Aorta (tissue), 5 donors: ENCODE measurements at regions of chr16 and their contacts with region 1.

Region 1: GRCh38 chr16:11515540-11516430 is 70.9 kb downstream of the LITAF start:
- DNase-seq: no peak
- ATAC-seq: no peak
- H3K4me3 ChIP-seq: no peak overlapping the region
- H3K27ac ChIP-seq: no peak overlapping the region
- H3K4me1 ChIP-seq: no peaks in the 10 kb centered on the region
- H3K27me3 ChIP-seq: no peaks in the 10 kb centered on the region

Region 2: GRCh38 chr16:11446566-11447119 is 69.1 kb before region 1 on chr16:
- intact Hi-C with region 1: loop called in 1 of 2 experiments (anchors 2 kb)
- DNase-seq: no peak
- ATAC-seq: no peak
- H3K4me3 ChIP-seq: no peak overlapping the region
- H3K27ac ChIP-seq: no peak overlapping the region
- H3K4me1 ChIP-seq: no peaks in the 10 kb centered on the region
- H3K27me3 ChIP-seq: no peaks in the 10 kb centered on the region